Endothelial cell of umbilical vein (primary cell): ENCODE measurements at regions of chr15 and their contacts with region 1.

Region 1: DNA sequence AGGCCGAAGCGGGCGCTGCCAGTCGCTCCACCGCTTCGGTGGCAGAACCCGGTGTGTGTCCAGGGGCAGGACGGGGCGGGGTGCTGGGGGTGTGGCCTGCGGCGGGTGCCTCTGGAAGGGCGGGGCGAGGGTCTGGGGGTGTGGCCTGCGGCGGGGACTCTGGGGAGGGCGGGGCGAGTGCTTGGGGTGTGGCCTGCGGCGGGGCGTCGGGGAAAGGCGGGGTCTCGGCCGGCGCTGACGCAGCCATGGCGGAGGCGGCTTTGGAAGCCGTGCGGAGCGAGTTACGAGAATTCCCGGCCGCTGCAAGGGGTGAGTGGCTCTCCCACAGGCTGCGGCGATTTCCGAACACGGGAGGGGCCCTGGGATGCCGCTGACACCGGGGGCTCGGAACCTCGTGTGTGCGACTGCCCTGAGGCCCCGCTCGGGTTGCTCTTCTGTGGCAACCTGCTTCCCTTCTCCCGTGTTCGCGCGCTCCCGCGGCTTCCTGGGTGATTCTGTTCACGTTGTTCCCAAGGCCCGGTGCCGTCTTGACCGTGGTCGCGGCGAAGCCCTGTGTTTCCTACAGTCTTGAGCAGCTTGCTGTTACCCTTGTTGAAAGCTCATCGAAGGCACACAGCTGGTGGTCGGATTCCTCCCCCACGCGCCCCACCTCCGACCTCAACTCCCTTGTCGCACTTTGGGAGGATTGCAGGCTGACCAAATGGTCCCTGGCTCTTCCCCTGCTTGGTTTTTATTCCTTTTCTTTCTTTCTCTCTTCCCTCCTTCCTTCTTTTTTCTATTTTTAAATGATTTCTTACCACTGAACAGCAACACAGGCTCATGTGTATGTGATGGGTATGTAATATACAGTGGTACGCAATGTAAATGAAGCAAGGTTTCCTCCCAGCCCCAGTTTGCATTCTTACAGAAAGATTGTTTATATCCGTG is at the start of gene JMJD7:
- DNase-seq: peak; percentile 88
- H3K4me3 ChIP-seq: peak within 1 kb of the TSS; percentile 41 to 87 (median 73)
- H3K27ac ChIP-seq: no peak within 1 kb of the TSS
- H3K4me1 ChIP-seq: peaks cover 10% of the 10 kb centered on the region
- H3K27me3 ChIP-seq: no peaks in the 10 kb centered on the region
- CTCF ChIP-seq: no peak
- POLR2A ChIP-seq: peak; percentile 69
- total RNA-seq, gene JMJD7: 11.4 and 15.0 TPM in 2 replicates

Region 2: GRCh38 chr15:41401904-41402267 is 426.3 kb before region 1 on chr15:
- CTCF ChIA-PET with region 1: no interaction called
- POLR2A ChIA-PET with region 1: no interaction called
- dilution Hi-C with region 1: no loop called
- intact Hi-C with region 1: no loop called
- DNase-seq: no peak
- H3K4me3 ChIP-seq: peak overlapping the region; percentile 54 to 93 (median 59)
- H3K27ac ChIP-seq: peak overlapping the region; percentile 48
- H3K4me1 ChIP-seq: peaks cover 5% of the 10 kb centered on the region
- H3K27me3 ChIP-seq: no peaks in the 10 kb centered on the region
- CTCF ChIP-seq: no peak
- POLR2A ChIP-seq: no peak

Region 3: GRCh38 chr15:41795996-41796856 is 31.9 kb before region 1 on chr15:
- CTCF ChIA-PET with region 1: no interaction called
- POLR2A ChIA-PET with region 1: no interaction called
- dilution Hi-C with region 1: no loop called
- intact Hi-C with region 1: no loop called
- DNase-seq: peak; percentile 86
- H3K4me3 ChIP-seq: peak overlapping the region in 1 of 3 experiments; percentile 25
- H3K27ac ChIP-seq: peak overlapping the region; percentile 61
- H3K4me1 ChIP-seq: peaks cover 41% of the 10 kb centered on the region
- H3K27me3 ChIP-seq: no peaks in the 10 kb centered on the region
- CTCF ChIP-seq: no peak
- POLR2A ChIP-seq: no peak

Region 4: DNA sequence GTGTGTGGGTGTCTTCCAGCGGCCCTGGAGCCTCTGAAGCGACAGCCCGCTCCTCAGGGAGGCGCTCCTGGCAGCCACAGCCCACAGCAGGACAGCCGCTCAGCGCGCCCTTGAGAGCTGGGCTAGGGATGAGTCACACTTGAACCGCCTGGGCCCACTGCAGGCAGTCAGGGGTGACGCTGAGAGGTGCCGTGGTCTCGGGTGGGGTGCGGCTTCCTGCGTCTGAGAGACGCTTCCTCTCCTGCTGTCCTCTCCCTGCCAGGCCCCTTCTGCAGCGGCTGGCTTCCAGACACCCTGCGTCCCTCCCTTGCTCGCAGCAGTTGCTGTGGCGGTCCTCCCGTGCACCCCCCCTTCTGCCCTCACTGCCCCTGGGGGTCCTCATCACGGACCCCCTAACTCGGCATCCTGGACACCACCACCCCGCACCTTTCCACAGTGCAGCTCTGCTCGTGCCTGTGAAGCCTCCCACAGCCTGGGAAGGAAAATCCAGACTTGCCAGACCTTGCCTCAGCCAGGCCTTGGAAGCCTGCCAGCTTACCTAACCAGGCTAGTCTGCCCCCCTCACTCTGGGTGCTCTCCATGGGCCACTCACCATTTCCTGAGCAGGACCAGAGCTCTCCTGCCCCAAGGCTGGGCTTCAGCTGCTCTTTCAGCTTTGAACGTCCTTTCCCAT is 66.8 kb after region 1 on chr15:
- CTCF ChIA-PET with region 1: no interaction called
- POLR2A ChIA-PET with region 1: no interaction called
- dilution Hi-C with region 1: no loop called
- intact Hi-C with region 1: loop called (anchors 5 kb)
- DNase-seq: peak; percentile 80
- H3K4me3 ChIP-seq: no peak overlapping the region
- H3K27ac ChIP-seq: peak overlapping the region; percentile 73
- H3K4me1 ChIP-seq: peaks cover 16% of the 10 kb centered on the region
- H3K27me3 ChIP-seq: no peaks in the 10 kb centered on the region
- CTCF ChIP-seq: peak in 1 of 2 donors; percentile 43
- POLR2A ChIP-seq: peak; percentile 82